Posterior cingulate gyrus (tissue), 11 donors: ENCODE measurements at regions of chr14 and their contacts with region 1.

Region 1: GRCh38 chr14:22319526-22320361 is 269.3 kb downstream of the DAD1 start:
- DNase-seq: peak in 5 of 10 donors; percentile 28 to 66 (median 50)

Region 2: GRCh38 chr14:22375321-22375930 is 55.7 kb after region 1 on chr14:
- intact Hi-C with region 1: loop called (anchors 2 kb)
- DNase-seq: no peak

Region 3: DNA sequence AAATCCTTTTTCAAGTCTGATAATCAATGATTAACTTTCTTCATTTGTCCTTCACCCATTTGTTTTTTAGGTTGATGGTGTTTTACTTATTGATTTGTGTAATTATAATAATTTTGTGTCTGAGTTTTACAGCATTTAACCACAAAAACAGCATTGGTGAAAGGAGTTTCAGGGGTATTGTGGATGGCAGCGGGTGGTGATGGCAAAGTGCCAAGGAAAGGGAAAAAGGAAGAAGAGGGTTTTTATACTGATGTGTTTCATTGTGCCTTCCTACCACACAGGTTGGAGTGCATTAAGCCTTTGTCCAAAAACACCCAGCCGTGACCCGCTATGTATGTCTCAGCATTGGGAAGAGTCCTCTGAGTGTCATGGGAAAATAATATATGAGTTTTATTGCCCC is 119.0 kb after region 1 on chr14:
- intact Hi-C with region 1: no loop called
- DNase-seq: no peak